ENCODE measurements at regions of chr10 and their contacts with region 1.

Region 1: GRCh38 chr10:79068562-79069324 is at the start of gene ZMIZ1:
- DNase-seq: peak; percentile 89
- H3K4me3 ChIP-seq: peak within 1 kb of the TSS; percentile 89
- H3K27ac ChIP-seq: peak within 1 kb of the TSS; percentile 99
- H3K4me1 ChIP-seq: peaks cover 65% of the 10 kb centered on the region
- H3K27me3 ChIP-seq: no peaks in the 10 kb centered on the region
- CTCF ChIP-seq: peak; percentile 40
- total RNA-seq, gene ZMIZ1: 55.9 TPM

Region 2: GRCh38 chr10:78981257-78981969 is 87.3 kb before region 1 on chr10:
- intact Hi-C with region 1: loop called (anchors 10 kb)
- DNase-seq: no peak
- H3K4me3 ChIP-seq: no peak overlapping the region
- H3K27ac ChIP-seq: no peak overlapping the region
- H3K4me1 ChIP-seq: peaks cover 28% of the 10 kb centered on the region
- H3K27me3 ChIP-seq: no peaks in the 10 kb centered on the region
- CTCF ChIP-seq: no peak

Region 3: GRCh38 chr10:79149662-79150443 is 81.1 kb after region 1 on chr10:
- intact Hi-C with region 1: loop called (anchors 5 kb)
- DNase-seq: peak; percentile 88
- H3K4me3 ChIP-seq: peak overlapping the region; percentile 37
- H3K27ac ChIP-seq: peak overlapping the region; percentile 99
- H3K4me1 ChIP-seq: peaks cover 100% of the 10 kb centered on the region
- H3K27me3 ChIP-seq: no peaks in the 10 kb centered on the region
- CTCF ChIP-seq: no peak

Region 4: GRCh38 chr10:79390551-79391209 is 321.9 kb after region 1 on chr10:
- intact Hi-C with region 1: no loop called
- DNase-seq: peak; percentile 19
- H3K4me3 ChIP-seq: no peak overlapping the region
- H3K27ac ChIP-seq: peak overlapping the region; percentile 8
- H3K4me1 ChIP-seq: peaks cover 75% of the 10 kb centered on the region
- H3K27me3 ChIP-seq: no peaks in the 10 kb centered on the region
- CTCF ChIP-seq: no peak

Measured in left ventricle myocardium inferior (tissue), 1 donor.